HCT116 (cell line): ENCODE measurements at regions of chr10 and their contacts with region 1.

Region 1: DNA sequence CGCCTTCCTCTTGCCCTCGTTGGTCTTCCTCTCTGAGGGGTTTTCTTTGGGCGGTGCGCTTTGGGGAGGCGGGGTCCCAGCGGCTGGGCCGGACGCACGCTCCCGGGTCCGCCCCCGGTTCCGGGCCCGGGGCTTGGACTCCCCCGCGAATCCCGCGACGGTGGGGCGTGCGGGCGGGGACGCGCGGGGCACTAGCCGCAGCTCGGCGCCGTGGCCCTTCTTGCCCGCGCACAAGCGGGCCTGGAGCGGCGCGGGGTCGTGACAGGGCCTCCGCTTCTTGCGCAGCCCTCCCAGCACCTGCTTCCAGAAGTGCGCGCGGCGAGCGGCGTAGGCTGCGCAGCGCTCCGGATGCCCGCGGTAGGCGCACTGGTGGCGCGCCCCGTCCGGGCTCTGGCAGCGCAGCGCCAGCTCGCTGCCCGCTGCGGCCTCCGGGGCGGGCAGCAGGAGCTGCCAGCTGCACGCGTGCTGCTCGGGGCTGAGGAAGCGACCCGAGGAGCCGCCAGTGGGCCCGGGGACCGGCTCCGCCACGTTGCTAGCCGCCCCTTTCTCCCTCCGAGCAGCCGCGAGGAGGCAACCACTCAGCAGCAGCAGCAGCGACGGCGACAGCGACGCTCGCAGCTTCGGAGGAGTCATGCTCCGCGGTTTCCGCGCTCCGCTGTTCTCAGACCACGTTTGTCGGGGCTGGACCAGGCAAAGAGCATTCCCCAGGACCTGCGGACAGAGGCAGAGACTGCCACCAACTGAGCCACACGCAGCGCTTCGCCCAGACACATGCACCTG is 759 bp downstream of the FGFBP3 start:
- DNase-seq: peak; percentile 84
- ATAC-seq: peak; percentile 89
- H3K4me3 ChIP-seq: peak overlapping the region; percentile 62 to 85
- H3K27ac ChIP-seq: peak overlapping the region; percentile 69
- H3K4me1 ChIP-seq: peaks cover 8 to 23% of the 10 kb centered on the region in 2 experiments; a peak in 3 of 4 replicates
- H3K27me3 ChIP-seq: no peaks in the 10 kb centered on the region
- CTCF ChIP-seq: peak; percentile 49 to 52 (median 50)
- POLR2A ChIP-seq: no peak
- RAD21 ChIP-seq: peak; percentile 53

Region 2: DNA sequence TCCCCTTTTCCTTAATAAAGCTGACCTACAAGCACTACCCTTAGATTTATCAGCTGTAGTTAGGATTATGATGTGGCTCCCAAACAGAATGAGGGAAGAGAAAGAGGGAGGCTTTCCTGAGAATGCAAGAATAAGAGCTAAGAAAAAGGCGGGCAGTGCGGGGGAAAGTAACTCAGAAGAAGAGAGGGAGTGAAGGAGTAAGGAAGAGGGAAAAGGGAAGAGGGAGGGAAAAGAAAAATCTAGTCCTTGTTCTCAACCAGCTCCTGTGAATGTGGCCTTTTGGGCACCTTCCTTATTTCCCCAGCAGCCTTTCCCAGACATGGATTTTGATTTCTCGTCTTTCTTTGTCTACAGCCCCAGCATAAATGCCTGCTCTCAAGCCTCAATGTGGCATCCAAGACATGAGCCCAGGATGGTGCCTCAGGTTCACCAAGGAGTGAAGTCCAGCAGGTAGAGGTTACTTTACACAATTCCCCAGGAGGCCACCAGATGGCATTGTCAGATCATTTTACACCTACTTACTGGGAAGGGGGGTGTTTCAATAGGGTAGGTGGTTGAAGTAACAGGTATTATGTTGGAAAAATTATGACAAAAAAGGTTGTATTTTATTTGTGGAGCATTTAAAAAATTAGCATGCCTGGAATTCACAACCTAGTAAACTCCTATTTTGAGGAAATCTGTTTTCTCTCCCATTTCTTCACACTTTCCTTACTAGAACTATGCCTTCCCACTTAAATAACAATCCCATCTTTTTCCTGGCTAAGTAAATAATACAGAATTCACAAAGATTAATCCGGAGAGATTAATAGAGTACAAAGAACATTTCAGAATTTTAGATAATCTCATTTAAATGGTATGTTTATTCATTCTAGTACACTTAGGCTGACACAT is 1157.2 kb before region 1 on chr10:
- CTCF ChIA-PET with region 1: no interaction called
- POLR2A ChIA-PET with region 1: no interaction called
- RAD21 ChIA-PET with region 1: no interaction called
- intact Hi-C with region 1: loop called (anchors 5 kb)
- DNase-seq: peak; percentile 45
- ATAC-seq: peak; percentile 99
- H3K4me3 ChIP-seq: no peak overlapping the region
- H3K27ac ChIP-seq: no peak overlapping the region
- H3K4me1 ChIP-seq: 0 out of 4 replicates have a peak, but pooled peaks cover 0 to 6% of the 10 kb centered on the region in 2 experiments
- H3K27me3 ChIP-seq: no peaks in the 10 kb centered on the region
- CTCF ChIP-seq: peak; percentile 73 to 91 (median 80)
- POLR2A ChIP-seq: no peak
- RAD21 ChIP-seq: peak; percentile 90

Region 3: DNA sequence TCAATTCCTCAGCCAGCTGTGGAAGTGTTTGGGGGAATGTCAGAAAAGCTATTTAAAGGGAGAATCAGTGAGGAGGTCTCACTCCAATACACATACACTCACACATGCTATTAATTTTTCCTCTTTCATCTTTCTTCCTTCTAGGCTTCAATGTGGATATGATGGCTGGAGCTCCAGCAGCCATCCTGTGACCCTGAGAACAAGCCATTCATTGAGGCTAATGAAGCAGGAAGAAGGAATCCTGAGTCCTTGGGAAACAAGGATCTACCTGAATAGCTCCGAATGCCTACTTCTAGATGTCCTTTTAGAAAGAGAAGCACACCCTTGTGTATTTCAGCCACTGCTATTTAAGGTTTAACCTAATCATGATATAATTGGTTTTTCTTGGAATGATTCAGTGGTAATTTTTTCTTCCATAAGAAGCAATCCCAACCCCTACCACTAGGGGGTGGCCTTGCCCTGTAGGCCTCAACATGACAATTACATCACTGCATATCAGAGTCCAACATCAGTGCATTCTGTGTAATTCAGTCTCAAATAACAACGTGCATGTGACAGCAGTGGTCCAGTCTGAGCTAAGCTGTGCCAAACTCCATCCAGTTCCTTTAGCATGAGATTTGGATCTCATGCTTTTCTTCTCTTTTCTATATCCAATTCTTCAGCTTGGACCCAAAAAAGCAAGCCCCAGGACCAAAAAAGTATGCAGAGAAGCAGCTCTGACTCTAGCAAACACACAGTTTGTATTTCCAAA is 902.4 kb before region 1 on chr10:
- CTCF ChIA-PET with region 1: interaction called, 3 read pairs
- POLR2A ChIA-PET with region 1: no interaction called
- RAD21 ChIA-PET with region 1: no interaction called
- intact Hi-C with region 1: loop called (anchors 10 kb)
- DNase-seq: peak; percentile 51
- ATAC-seq: peak; percentile 93
- H3K4me3 ChIP-seq: no peak overlapping the region
- H3K27ac ChIP-seq: no peak overlapping the region
- H3K4me1 ChIP-seq: no peaks in the 10 kb centered on the region
- H3K27me3 ChIP-seq: no peaks in the 10 kb centered on the region
- CTCF ChIP-seq: peak; percentile 84 to 96 (median 91)
- POLR2A ChIP-seq: no peak
- RAD21 ChIP-seq: peak; percentile 94

Region 4: DNA sequence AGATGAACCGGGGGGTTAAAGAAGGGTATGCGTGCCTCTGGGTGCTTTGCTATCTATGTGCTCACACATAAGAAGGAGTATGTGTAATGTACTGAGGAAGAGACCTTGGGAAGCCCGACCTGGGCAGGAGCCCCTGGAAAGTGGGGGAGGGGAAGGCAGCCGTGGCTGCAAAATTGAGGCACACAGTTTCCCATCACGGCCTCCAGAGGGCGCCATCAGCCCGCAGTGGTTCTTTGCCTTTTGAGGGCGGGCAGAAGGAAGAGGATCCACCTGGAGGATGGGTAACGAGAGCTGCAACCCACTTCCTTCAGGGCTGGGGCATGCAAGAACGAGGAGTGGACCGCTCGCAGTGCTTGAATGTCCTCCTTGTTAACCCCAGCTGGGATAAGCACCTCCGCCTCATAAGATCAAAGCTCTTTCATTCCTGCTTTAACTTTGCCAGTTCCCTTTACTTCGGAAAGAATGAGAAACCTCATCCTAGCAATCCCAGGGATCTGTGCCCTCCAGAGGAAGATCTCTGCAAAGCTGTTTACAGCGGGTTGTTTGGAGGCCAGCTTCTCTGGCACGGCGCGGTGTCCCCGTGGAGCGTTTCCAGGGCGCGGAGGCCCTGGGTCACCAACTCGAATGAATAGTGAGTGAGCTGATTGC is 610.2 kb before region 1 on chr10:
- CTCF ChIA-PET with region 1: interaction called, 17 read pairs
- POLR2A ChIA-PET with region 1: no interaction called
- RAD21 ChIA-PET with region 1: no interaction called
- intact Hi-C with region 1: loop called (anchors 1 kb)
- DNase-seq: peak; percentile 56
- ATAC-seq: peak; percentile 94
- H3K4me3 ChIP-seq: peak overlapping the region in 1 of 2 experiments; percentile 8; a peak in 1 of 4 replicates
- H3K27ac ChIP-seq: no peak overlapping the region
- H3K4me1 ChIP-seq: peaks cover 4 to 11% of the 10 kb centered on the region in 2 experiments; a peak in 2 of 4 replicates
- H3K27me3 ChIP-seq: no peaks in the 10 kb centered on the region
- CTCF ChIP-seq: peak; percentile 86 to 90 (median 87)
- POLR2A ChIP-seq: no peak
- RAD21 ChIP-seq: peak; percentile 96

Region 5: GRCh38 chr10:91551856-91552255 is 356.7 kb before region 1 on chr10:
- CTCF ChIA-PET with region 1: interaction called, 3 read pairs
- POLR2A ChIA-PET with region 1: no interaction called
- RAD21 ChIA-PET with region 1: no interaction called
- intact Hi-C with region 1: loop called (anchors 5 kb)
- DNase-seq: peak; percentile 16
- ATAC-seq: peak; percentile 84
- H3K4me3 ChIP-seq: no peak overlapping the region
- H3K27ac ChIP-seq: no peak overlapping the region
- H3K4me1 ChIP-seq: no peaks in the 10 kb centered on the region
- H3K27me3 ChIP-seq: no peaks in the 10 kb centered on the region
- CTCF ChIP-seq: peak; percentile 62 to 97 (median 71)
- POLR2A ChIP-seq: no peak
- RAD21 ChIP-seq: peak; percentile 84

Region 6: GRCh38 chr10:91643700-91644099 is 264.8 kb before region 1 on chr10:
- CTCF ChIA-PET with region 1: interaction called, 3 read pairs
- POLR2A ChIA-PET with region 1: no interaction called
- RAD21 ChIA-PET with region 1: no interaction called
- intact Hi-C with region 1: loop called (anchors 5 kb)
- DNase-seq: no peak
- ATAC-seq: peak; percentile 69
- H3K4me3 ChIP-seq: no peak overlapping the region
- H3K27ac ChIP-seq: no peak overlapping the region
- H3K4me1 ChIP-seq: no peaks in the 10 kb centered on the region
- H3K27me3 ChIP-seq: no peaks in the 10 kb centered on the region
- CTCF ChIP-seq: peak; percentile 35 to 50 (median 41); a peak in 5 of 6 replicates
- POLR2A ChIP-seq: no peak
- RAD21 ChIP-seq: peak; percentile 60

Region 7: DNA sequence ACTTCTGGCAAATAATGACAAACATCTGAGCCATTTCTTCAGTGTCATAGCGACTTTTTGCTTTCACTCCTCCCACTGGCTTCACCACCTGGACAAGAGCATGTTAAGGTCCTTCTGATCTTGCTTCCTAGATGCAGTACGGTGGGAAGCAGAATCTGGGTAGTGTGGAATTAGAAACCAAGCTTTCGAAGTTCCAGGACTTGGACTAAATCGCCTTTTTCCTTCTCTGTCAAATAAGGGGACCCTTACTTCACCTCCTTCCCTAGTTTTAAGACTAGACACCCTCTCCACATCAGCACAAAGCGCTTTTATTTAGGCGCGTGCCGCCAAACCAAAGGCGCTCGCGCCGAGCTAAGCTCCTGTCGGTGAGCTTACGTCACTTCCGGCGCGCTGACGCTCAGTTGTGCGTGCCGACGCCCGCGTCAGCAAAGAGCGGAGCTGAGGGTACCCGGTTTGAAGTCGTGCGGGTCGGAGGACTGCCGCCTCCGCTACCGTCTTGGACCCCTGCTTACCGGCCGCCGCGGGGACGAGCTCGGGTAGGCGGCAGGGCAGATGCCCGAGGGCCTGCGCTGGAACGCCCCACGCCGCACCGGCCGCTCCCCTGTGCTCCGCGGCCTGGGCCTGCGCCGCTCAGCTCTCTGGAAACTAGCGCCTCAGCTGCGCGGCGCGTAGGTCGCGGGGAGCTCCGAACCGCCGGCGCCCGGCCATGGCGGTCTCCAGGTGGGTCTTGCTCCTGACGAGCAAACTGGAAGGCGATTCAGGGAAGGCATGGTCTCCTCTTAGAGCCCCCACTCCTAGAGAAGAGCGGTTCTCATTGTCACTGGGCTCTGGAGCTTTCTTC is 15.1 kb after region 1 on chr10 and contains the start of gene BTAF1:
- CTCF ChIA-PET with region 1: interaction called, 12 read pairs
- POLR2A ChIA-PET with region 1: interaction called, 5 read pairs
- RAD21 ChIA-PET with region 1: interaction called in 1 of 2 experiments, 3 read pairs
- intact Hi-C with region 1: no loop called
- DNase-seq: peak; percentile 93
- ATAC-seq: peak; percentile 97
- H3K4me3 ChIP-seq: peak within 1 kb of the TSS; percentile 72 to 74
- H3K27ac ChIP-seq: peak within 1 kb of the TSS; percentile 68
- H3K4me1 ChIP-seq: peaks cover 7 to 19% of the 10 kb centered on the region in 2 experiments; a peak in 3 of 4 replicates
- H3K27me3 ChIP-seq: no peaks in the 10 kb centered on the region
- CTCF ChIP-seq: no peak
- POLR2A ChIP-seq: peak; percentile 98
- RAD21 ChIP-seq: no peak
- total RNA-seq, gene BTAF1: 42.5 TPM